Endothelial cell of umbilical vein (primary cell): ENCODE measurements at regions of chr7 and their contacts with region 1.

Region 1: DNA sequence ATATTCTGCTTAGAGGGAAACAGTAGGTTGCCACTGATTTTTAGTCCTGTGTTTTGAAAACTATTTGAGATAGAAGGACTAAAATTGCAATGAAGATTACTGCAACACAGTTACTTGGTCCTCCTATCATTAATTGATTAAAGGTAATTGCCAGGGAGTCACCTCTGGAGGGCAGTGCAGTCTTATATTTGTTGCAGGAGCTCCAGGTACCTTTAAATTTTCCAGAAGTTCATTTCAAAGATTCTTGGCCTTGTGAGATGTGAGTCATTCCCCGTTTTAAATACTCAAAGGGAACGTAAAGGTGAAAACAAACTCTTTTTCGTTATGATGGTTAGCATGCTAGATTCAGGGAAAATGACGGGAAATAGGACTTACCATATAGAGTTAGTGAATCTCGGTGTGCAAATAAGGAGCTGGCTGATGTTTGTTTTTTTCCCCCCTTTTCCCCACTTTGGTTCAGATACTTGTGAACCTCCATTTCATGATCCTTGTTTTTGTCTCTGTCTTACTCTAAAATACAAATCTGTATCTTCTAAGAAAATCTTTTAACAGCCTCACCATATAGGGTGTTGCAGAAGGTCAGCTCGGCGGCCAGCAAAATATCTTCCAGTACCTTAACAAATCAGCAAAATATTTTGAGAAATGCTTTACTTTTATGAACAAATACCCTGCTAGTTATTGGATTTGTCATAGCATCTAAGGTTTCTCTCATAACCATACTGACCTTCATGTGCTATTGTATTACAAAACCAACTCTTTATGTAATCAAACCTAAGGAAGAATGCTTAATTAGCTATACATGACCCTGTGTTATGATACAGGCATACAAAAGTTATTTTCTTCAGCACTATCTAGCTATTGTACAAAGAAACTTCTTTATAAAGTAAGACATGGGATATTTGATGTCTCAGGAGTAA is 143.0 kb upstream of the HDAC9 start:
- DNase-seq: peak; percentile 78
- H3K4me3 ChIP-seq: no peak overlapping the region
- H3K27ac ChIP-seq: no peak overlapping the region
- H3K4me1 ChIP-seq: peaks cover 2% of the 10 kb centered on the region
- H3K27me3 ChIP-seq: no peaks in the 10 kb centered on the region
- CTCF ChIP-seq: peak; percentile 40 to 55
- POLR2A ChIP-seq: no peak

Region 2: GRCh38 chr7:18257711-18258110 is 94.9 kb before region 1 on chr7:
- CTCF ChIA-PET with region 1: no interaction called
- POLR2A ChIA-PET with region 1: no interaction called
- dilution Hi-C with region 1: no loop called
- intact Hi-C with region 1: no loop called
- DNase-seq: peak; percentile 43
- H3K4me3 ChIP-seq: no peak overlapping the region
- H3K27ac ChIP-seq: no peak overlapping the region
- H3K4me1 ChIP-seq: no peaks in the 10 kb centered on the region
- H3K27me3 ChIP-seq: no peaks in the 10 kb centered on the region
- CTCF ChIP-seq: no peak
- POLR2A ChIP-seq: no peak

Region 3: DNA sequence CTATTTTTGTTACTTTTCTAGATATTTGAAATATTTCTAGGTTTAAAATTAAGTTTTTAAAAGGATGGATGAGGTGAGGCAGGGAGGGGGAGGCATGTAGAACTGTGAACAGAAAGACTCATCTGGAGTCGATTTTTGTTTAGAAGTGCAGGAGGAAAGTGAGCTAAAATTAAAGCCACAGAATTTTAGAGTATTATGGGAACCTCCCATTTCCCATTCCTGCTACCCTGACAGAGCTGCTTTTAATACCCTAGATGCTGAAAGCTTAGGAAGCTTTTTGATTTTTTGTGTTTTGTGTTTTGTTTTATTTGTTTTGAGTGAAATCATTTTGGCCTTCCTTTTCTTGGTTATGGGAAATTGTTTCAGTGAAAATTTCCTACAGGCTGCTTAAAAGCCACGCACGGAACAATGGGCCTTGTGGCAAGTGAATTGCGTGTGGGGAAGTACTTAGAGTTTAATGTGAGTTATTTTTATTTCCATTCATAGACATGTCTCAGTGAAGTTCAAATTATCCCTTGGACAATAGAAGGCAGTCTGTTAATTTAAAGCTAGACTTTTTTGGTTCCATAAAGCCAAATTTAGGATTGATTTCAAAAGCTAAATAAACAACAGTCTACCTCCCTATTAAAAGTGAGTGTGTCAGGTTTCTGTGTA is 41.0 kb after region 1 on chr7:
- CTCF ChIA-PET with region 1: interaction called, 13 read pairs
- POLR2A ChIA-PET with region 1: no interaction called
- dilution Hi-C with region 1: no loop called
- intact Hi-C with region 1: loop called (anchors 2 kb)
- DNase-seq: peak; percentile 52
- H3K4me3 ChIP-seq: no peak overlapping the region
- H3K27ac ChIP-seq: no peak overlapping the region
- H3K4me1 ChIP-seq: peaks cover 16% of the 10 kb centered on the region
- H3K27me3 ChIP-seq: no peaks in the 10 kb centered on the region
- CTCF ChIP-seq: no peak
- POLR2A ChIP-seq: no peak

Region 4: DNA sequence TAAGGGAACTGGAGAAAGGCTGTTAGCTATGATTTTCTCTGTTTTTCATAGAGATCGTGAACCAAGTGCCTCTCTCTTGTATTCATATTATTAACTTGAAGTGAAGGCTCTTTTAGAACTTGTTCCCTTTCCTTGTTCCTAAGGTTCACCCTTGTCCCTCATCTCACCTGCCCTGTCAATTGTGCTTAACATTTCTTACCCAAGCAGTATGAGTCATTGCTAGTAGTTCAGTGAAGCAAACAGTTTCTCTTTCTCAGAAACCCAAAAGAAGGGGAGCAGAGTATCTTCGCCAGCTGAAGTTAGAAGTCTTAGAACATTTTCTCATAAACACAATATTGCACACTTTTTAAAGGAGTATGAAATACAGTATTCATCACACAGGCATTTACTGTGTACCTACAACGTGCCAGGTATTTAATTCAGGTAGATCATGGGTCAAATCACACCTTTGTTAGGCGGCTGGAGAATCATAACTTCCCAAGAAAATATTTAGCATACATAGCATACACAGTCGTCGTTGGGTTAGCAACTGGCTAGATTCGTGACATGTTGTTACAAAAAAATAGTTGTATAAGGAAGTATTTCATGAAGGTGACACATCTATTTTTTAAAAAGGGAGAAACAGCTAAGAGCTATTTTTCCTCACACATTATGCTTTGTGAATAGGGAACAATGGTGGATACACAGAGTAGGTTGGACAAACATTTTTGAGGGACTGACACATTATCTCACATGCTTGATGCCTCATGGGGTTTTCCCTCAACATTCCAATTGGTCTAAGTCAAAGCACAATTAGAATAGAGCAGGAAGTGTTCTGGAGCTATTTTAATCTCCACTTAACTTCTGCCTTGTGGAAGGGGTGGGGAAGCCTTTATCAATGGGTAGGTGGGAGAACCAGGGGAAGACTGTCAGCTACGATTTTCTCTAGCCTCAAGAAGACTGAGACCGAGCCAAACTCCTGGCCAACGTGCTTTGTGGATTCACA is 156.1 kb after region 1 on chr7:
- CTCF ChIA-PET with region 1: interaction called, 7 read pairs
- POLR2A ChIA-PET with region 1: no interaction called
- dilution Hi-C with region 1: no loop called
- intact Hi-C with region 1: loop called (anchors 2 kb)
- DNase-seq: peak; percentile 93
- H3K4me3 ChIP-seq: peak overlapping the region in 1 of 3 experiments; percentile 64
- H3K27ac ChIP-seq: peak overlapping the region; percentile 94
- H3K4me1 ChIP-seq: peaks cover 31% of the 10 kb centered on the region
- H3K27me3 ChIP-seq: no peaks in the 10 kb centered on the region
- CTCF ChIP-seq: no peak
- POLR2A ChIP-seq: no peak

Region 5: GRCh38 chr7:18570890-18571478 is 218.4 kb after region 1 on chr7:
- CTCF ChIA-PET with region 1: interaction called, 572 read pairs
- POLR2A ChIA-PET with region 1: interaction called, 6 read pairs
- dilution Hi-C with region 1: loop called (anchors 25 kb)
- intact Hi-C with region 1: loop called (anchors 1 kb)
- DNase-seq: peak; percentile 72
- H3K4me3 ChIP-seq: no peak overlapping the region
- H3K27ac ChIP-seq: no peak overlapping the region
- H3K4me1 ChIP-seq: no peaks in the 10 kb centered on the region
- H3K27me3 ChIP-seq: no peaks in the 10 kb centered on the region
- CTCF ChIP-seq: peak; percentile 21 to 28
- POLR2A ChIP-seq: no peak

Region 6: DNA sequence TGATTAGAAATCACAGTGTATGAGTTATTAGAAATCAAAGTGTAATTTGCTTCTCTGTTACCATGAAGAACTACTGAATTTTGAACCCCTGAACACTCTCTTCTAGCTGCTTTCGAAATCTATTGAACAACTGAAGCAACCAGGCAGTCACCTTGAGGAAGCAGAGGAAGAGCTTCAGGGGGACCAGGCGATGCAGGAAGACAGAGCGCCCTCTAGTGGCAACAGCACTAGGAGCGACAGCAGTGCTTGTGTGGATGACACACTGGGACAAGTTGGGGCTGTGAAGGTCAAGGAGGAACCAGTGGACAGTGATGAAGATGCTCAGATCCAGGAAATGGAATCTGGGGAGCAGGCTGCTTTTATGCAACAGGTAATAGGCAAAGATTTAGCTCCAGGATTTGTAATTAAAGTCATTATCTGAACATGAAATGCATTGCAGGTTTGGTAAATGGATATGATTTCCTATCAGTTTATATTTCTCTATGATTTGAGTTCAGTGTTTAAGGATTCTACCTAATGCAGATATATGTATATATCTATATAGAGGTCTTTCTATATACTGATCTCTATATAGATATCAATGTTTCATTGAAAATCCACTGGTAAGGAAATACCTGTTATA is 313.6 kb after region 1 on chr7:
- CTCF ChIA-PET with region 1: interaction called, 83 read pairs
- POLR2A ChIA-PET with region 1: no interaction called
- dilution Hi-C with region 1: no loop called
- intact Hi-C with region 1: loop called (anchors 1 kb)
- DNase-seq: peak; percentile 62
- H3K4me3 ChIP-seq: no peak overlapping the region
- H3K27ac ChIP-seq: no peak overlapping the region
- H3K4me1 ChIP-seq: peaks cover 28% of the 10 kb centered on the region
- H3K27me3 ChIP-seq: peaks cover 11 to 23% of the 10 kb centered on the region in 2 experiments
- CTCF ChIP-seq: peak; percentile 92 to 93
- POLR2A ChIP-seq: no peak

Region 7: GRCh38 chr7:19491821-19492452 is 1139.3 kb after region 1 on chr7:
- CTCF ChIA-PET with region 1: interaction called, 21 read pairs
- POLR2A ChIA-PET with region 1: no interaction called
- dilution Hi-C with region 1: no loop called
- intact Hi-C with region 1: loop called (anchors 5 kb)
- DNase-seq: peak; percentile 54
- H3K4me3 ChIP-seq: no peak overlapping the region
- H3K27ac ChIP-seq: no peak overlapping the region
- H3K4me1 ChIP-seq: no peaks in the 10 kb centered on the region
- H3K27me3 ChIP-seq: no peaks in the 10 kb centered on the region
- CTCF ChIP-seq: peak; percentile 30 to 37
- POLR2A ChIP-seq: no peak